Calu3 (cell line): ENCODE measurements at regions of chr5 and their contacts with region 1.

Region 1: DNA sequence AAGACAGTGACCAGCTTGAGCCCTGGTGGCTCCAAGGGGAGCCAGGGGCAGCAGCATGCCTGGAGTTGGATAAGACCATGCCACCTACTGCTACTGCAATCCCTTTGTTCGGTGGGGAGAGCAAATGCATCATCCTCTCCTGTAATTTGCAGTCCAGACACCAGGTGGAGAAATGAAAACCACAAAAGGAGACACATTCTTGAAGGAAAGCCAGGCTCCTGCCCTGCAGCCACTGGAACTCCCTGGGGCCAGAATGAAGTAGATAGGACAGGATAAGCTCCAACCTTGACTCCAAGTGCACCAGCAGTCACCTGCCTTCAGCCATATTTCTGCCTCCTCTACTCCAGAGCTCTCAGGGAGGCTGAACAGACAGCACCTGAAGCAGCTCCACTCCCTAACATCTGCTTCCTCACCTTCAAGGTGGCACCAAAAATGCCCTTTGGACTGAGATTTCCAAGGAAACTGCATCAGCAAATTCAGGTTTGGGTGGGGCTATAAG is 65.1 kb upstream of the IQGAP2 start:
- DNase-seq: peak; percentile 79
- H3K4me3 Mint-ChIP-seq: no peak overlapping the region
- H3K27ac Mint-ChIP-seq: no peak overlapping the region
- H3K4me1 Mint-ChIP-seq: peaks cover 9% of the 10 kb centered on the region
- H3K27me3 Mint-ChIP-seq: no peaks in the 10 kb centered on the region
- CTCF ChIP-seq: peak; percentile 70

Region 2: GRCh38 chr5:75985077-75985476 is 352.9 kb before region 1 on chr5:
- CTCF ChIA-PET with region 1: no interaction called
- intact Hi-C with region 1: no loop called
- DNase-seq: no peak
- H3K4me3 Mint-ChIP-seq: no peak overlapping the region
- H3K27ac Mint-ChIP-seq: no peak overlapping the region
- H3K4me1 Mint-ChIP-seq: no peaks in the 10 kb centered on the region
- H3K27me3 Mint-ChIP-seq: peaks cover 67% of the 10 kb centered on the region
- CTCF ChIP-seq: no peak

Region 3: DNA sequence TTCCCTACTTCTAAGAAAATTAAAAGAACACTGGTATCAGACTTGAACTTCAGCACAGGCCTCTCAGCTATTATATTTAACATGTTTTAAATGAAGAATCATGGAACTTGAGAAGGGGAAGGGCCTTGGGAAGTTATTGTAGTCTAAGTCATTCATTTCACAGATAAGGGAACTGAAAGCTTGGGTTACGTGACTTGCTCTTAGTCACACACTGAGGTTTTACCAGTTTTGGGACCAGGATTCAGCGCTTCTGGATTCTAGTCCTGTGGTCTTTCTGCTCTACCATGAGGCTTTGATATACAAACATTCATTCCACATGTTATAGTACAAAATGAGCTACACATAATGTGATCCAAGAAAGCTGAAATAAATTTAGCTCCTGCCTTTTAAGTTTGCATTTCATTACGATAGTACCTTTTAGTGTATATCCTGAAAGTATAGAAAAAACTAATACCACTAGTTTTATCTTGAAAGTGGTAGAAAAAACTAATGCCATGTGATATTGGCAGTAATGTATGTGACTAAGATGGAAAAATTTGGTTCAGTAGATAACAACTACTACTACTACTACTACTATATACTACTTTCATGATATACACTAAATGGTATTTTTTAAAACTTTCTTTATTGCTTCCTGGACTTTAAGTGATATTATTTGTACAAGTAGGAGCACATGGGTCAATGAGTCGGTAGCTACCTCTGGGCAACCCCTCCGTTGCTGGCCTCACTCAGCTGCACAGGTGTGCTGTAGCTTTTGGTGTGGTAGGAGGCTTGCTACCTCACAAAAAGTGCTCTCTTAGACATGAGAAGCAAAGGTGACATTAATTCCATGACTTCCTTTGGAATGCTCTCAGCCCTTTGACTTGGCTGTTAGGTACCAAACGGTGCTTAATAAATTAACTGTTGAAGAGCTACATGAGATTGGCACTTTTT is 244.5 kb after region 1 on chr5:
- CTCF ChIA-PET with region 1: interaction called, 8 read pairs
- intact Hi-C with region 1: loop called (anchors 2 kb)
- DNase-seq: no peak
- H3K4me3 Mint-ChIP-seq: no peak overlapping the region
- H3K27ac Mint-ChIP-seq: no peak overlapping the region
- H3K4me1 Mint-ChIP-seq: no peaks in the 10 kb centered on the region
- H3K27me3 Mint-ChIP-seq: no peaks in the 10 kb centered on the region
- CTCF ChIP-seq: no peak